ENCODE measurements at regions of chr11 and their contacts with region 1.

Region 1: DNA sequence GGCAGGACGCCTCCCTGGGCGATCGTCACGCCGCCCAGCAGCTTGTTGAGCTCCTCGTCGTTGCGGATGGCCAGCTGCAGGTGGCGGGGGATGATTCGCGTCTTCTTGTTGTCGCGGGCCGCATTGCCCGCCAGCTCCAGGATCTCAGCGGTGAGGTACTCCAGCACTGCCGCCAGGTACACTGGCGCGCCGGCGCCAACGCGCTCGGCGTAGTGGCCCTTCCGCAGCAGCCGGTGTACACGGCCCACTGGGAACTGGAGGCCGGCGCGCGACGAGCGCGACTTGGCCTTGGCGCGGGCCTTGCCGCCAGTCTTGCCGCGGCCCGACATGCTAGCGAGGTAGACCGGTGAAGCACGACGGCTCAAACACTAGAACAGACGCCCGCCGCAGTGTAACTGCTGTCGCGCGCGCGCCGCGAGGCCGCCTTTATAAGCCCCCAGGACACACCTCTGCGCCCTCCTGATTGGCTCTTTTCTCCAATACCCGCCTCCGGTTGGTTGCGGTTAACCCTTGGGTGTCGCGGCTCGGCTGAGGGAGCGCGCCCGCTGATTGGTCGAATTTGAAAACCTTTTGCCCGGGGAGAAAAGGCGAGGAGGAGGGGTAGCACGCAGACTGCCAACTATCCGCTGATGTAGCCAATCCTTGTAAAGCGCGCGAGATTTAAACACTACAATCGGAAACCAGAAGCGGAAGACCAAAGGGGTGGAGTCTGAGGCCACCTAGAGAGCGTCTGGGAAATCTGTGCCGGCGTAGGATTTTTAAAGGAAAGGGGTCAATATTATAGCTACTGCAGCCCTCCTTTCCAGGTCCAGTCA is 6.4 kb downstream of the DPAGT1 start:
- DNase-seq: peak; percentile 99
- H3K4me3 ChIP-seq: peak overlapping the region; percentile 92
- H3K4me1 ChIP-seq: peaks cover 20% of the 10 kb centered on the region
- H3K27me3 ChIP-seq: no peaks in the 10 kb centered on the region

Region 2: GRCh38 chr11:119030329-119031049 is 64.8 kb before region 1 on chr11 and contains the start of gene SLC37A4:
- in situ Hi-C with region 1: loop called (anchors 5 kb)
- DNase-seq: peak; percentile 96 to 99
- H3K4me3 ChIP-seq: peak within 1 kb of the TSS; percentile 79
- H3K4me1 ChIP-seq: peaks cover 10% of the 10 kb centered on the region
- H3K27me3 ChIP-seq: no peaks in the 10 kb centered on the region

Measured in HAP-1 (cell line).